ENCODE measurements at regions of chr2 and their contacts with region 1.

Region 1: DNA sequence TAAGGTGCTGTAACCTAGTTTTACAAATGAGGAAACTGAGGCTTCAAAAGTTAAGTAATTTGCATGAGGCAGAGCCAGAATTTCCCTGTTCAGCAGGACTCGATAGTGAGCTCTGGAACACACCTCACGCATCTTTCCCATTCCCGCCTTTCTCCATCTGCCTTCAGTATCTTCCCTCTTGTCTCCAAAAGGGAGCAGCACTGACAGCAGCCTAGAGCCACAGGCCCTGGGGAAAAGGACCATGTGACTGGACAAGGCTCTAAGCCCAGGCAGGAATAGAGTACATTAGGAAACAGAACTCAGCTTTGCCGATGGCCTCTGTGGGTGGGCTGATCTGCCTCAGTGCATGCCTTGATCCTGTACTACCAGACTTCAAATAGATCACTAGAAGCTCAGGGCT is 21.5 kb downstream of the GPR155 start:
- DNase-seq: no peak
- CTCF ChIP-seq: no peak

Region 2: DNA sequence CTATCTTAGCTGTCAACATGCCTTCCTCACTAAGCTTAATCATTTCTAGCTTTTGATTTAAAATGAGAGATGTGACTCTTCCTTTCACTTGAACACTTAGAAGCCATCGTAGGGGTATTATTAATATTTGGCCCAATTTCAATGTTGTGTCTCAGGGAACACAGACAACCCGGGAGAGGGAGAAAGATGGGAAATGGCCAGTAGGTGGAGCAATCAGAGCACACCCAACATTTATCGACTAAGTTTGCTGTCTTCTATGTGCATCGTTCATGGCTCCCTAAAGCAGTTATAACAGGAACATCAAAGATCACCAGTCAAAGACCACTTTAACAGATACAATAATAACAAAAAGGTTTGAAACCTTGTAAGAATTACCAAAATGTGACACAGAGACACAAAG is 327.2 kb before region 1 on chr2:
- in situ Hi-C with region 1: no loop called
- DNase-seq: no peak
- CTCF ChIP-seq: no peak

Region 3: GRCh38 chr2:174522553-174522952 is 57.2 kb after region 1 on chr2:
- in situ Hi-C with region 1: loop called (anchors 10 kb)
- DNase-seq: no peak
- CTCF ChIP-seq: peak; percentile 31

Region 4: GRCh38 chr2:174697255-174697654 is 231.9 kb after region 1 on chr2:
- in situ Hi-C with region 1: loop called (anchors 10 kb)
- DNase-seq: peak; percentile 77
- CTCF ChIP-seq: peak; percentile 85